ENCODE measurements at regions of chr9 and their contacts with region 1.

Region 1: DNA sequence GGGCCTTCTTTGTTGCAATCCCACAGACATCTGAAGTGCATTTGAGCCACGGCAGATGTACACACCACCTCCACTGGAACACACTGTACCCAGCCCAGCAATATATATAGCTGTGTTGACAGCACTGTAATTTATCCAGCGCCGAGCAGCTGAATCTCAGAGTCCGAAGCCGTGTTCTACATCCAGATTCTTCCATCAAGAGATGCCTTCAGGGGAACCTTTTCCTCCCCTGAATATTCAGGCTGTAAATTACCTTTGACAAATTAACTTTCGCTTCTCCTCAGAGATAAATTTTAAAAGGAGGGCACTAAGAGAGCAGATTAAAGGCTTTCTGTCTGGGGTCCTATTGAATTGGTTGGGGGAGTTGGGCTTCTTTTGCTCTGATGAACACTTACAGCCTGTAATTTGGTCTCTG is 76.4 kb downstream of the ROR2 start:
- DNase-seq: no peak

Region 2: DNA sequence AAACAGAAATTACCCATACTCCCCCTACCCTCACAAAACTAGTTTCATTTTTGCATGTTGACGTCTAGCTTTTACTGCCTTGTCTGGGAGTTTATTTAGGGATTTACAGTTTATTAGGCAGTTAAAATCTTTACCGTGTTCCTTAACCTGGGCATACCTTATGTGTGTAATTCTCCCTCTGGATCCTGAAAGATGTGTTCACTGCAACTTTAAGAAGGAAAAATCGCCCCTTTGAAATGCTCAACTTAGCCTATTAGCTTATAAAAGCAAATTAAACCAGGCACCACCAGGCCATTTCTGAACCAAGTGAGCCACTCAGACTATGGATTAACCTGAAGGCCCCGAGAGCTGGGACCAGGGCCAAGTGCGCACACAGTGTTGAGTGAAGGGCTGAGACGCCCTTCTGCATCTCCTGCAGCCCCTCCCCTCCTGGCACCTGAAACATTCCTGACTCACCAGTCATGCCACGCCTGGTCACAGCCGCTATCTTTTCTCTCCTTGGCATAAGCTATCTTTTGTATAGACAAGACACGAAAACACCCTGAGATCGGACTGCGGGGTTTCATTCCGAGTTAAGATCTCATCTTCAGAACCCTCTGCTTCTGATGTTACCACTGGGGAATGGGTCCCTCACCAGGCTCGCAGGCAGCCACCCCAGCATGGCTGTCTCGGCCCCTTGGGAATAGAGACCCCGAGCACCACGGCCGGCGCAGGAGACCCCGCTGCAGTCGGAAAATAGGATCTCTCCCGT is 35.5 kb before region 1 on chr9:
- intact Hi-C with region 1: loop called in 1 of 2 experiments (anchors 5 kb)
- DNase-seq: peak; percentile 78

Measured in posterior vena cava (tissue), 2 donors.